ENCODE measurements at regions of chr10 and their contacts with region 1.

Region 1: DNA sequence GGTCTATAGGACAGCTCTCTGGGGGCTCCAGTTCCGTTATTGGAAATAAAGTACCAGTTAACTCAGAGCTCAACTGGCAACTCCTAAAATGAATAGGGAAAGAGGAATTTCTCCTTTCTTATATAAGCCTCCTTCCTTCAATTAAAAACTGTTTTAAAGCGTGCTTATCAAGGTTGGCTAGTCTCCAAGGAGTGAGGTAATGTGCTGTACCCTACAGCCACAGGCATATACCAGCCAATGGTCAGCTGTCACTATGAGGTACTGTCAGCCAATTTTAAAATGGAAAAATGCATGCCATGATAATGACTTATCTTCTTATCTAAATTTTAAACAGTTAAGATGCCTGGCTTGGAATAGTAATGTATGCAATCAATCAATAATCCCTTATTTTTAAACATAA is 76.2 kb downstream of the PLCE1 start:
- DNase-seq: no peak
- ATAC-seq: peak in 4 of 8 donors; percentile 47 to 69 (median 60)
- H3K4me3 ChIP-seq: no peak overlapping the region
- H3K27ac ChIP-seq: peak overlapping the region in 3 of 10 donors; percentile 5 to 53 (median 16)
- H3K4me1 ChIP-seq: peaks cover 0 to 33% (median 0%) of the 10 kb centered on the region in 9 donors
- H3K27me3 ChIP-seq: no peaks in the 10 kb centered on the region
- CTCF ChIP-seq: no peak

Region 2: DNA sequence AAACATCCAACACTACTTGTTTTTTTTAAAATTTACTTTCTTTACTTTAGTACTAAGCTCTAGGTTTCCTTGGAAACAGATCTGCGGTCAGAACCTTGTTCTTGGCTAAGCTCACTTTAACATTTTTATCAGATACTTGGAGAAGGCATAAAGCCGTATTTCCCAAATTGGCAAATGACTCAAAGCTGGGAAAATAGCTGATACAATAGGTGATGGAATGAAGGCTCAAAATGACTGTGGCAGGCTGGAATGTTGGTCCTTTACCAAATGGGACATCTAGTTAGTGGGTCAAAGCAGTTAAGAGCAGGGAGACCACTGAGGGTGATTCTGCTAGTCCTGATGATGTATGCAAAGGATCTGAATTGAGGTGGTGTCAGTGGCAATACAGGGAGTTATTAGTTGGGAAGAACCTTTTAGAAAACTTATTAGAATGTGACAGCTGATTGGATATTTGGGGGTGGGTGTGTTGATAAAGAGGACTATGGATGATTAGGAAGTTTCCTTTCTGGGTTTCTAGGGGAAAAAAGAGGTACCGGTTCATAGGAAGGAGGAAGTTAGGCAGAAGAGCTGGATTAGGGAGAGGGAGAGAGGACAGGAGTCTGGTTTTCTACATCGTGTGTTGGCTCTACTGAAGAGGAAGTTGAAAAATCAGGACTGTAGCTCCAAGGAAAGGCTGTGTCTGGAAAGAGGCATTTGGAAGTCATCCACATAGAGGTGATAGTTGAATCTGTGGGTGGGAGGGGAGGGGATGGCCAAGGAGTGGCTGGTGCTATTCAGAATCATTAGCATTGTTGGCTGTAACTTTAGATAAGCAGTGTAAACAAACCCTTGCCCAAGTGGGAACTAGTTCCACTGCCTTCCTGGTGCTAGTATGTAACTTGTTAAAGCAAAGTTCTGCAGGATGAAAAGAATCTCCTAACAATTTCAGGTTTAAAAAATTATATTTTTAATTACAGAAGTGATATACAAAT is 63.0 kb before region 1 on chr10:
- intact Hi-C with region 1: loop called in 1 of 10 experiments (anchors 5 kb)
- DNase-seq: no peak
- ATAC-seq: peak; percentile 43 to 82 (median 68)
- H3K4me3 ChIP-seq: no peak overlapping the region
- H3K27ac ChIP-seq: peak overlapping the region in 5 of 10 donors; percentile 23 to 72 (median 66)
- H3K4me1 ChIP-seq: peaks cover 0 to 35% (median 15%) of the 10 kb centered on the region in 9 donors
- H3K27me3 ChIP-seq: no peaks in the 10 kb centered on the region
- CTCF ChIP-seq: no peak

Measured in heart right ventricle (tissue), 16 donors.